ENCODE measurements at regions of chr17 and their contacts with region 1.

Region 1: GRCh38 chr17:50541716-50542688 is 5.0 kb upstream of the SPATA20 start:
- DNase-seq: peak; percentile 88 to 95 (median 95)
- ATAC-seq: peak; percentile 94
- H3K4me3 ChIP-seq: peak overlapping the region; percentile 49
- H3K27ac ChIP-seq: peak overlapping the region; percentile 21
- H3K4me1 ChIP-seq: peaks cover 4% of the 10 kb centered on the region
- H3K27me3 ChIP-seq: no peaks in the 10 kb centered on the region

Region 2: DNA sequence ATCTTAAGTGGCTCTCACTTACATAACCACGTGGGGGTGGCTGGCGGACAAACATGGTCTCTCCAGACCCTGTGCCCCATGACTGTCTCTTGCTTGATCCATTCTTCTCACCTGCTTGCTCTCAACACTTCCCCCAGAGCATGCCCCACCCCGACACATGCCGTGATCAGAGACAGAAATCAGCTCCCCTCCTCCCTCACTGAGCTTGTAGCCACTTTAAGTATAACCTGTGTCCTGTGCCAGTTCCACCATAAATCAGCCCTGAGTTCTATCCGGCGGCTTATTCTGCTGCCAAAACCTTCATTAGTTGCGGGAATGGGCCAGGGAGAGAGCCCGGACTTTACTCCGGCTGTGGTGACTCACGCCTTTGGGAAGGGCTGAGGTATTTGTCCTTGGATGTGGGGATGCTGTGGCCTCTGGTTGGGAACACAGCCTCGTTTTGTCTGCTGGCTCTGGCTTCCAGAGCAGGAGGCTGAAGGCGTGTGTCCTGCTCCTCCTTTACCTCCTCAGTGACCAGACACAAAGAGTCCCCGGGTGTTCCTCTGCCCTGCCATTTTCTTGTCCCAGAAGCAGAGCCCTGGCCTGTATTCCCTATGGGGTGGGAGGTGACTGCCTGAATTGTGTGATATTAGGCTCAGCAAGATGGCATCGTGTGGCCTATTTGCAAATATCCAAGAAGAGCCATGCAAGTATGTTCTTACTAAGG is 144.6 kb after region 1 on chr17:
- intact Hi-C with region 1: loop called in 3 of 4 experiments (anchors 5 kb)
- DNase-seq: peak; percentile 81 to 83 (median 82)
- ATAC-seq: peak; percentile 77 to 82
- H3K4me3 ChIP-seq: no peak overlapping the region
- H3K27ac ChIP-seq: peak overlapping the region; percentile 82
- H3K4me1 ChIP-seq: peaks cover 5% of the 10 kb centered on the region
- H3K27me3 ChIP-seq: no peaks in the 10 kb centered on the region

Region 3: DNA sequence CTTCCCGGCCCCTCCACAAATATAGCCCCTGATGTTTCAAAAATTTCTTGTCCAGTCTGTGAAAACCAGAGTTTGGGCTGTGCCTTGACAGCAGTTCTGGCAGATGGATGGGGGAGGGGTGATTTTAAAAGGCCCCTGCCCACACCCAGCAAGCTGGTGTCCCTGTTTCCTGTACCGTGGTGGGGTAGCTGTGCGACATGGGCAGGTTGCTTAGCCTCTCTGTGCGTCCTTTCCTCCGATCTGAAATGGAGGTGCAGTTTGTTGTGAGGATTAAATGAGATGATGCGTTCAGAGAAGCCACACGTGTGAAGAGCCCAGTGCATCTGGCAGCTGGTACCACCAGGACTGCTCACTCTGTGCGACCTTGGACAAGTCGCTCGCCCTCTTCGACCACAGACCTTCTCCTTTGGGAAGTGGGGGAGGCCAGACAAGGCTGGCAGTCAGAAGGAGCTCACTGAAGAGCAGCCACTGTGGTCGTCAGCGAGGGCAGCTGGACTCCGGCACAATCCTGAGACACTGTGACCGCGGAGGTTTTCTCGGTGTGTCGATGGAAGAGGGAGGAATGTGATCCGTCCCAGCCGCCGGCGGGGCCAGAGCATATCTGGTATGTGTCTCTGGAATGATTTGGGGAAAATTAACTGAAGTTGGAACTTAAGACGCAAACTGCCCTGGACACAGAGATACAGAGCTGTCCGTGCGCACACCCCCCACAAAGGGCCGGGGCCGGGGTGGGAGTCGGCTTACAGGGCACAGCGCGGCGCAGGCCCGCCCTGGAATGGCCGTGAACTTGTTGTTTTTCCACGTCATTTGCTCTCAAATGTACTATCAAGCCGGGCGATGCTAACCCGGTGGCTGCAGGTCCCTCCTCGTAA is 292.7 kb after region 1 on chr17:
- intact Hi-C with region 1: loop called in 2 of 4 experiments (anchors 5 to 10 kb)
- DNase-seq: peak in 1 of 3 donors; percentile 81
- ATAC-seq: peak; percentile 25 to 40
- H3K4me3 ChIP-seq: peak overlapping the region; percentile 25
- H3K27ac ChIP-seq: no peak overlapping the region
- H3K4me1 ChIP-seq: peaks cover 4% of the 10 kb centered on the region
- H3K27me3 ChIP-seq: no peaks in the 10 kb centered on the region